HEK293T (cell line): ENCODE measurements at regions of chr6 and their contacts with region 1.

Region 1: GRCh38 chr6:37018198-37019064 is 13.0 kb downstream of the FGD2 start:
- DNase-seq: peak; percentile 87

Region 2: GRCh38 chr6:36874443-36875249 is 143.8 kb before region 1 on chr6 and contains the start of gene PPIL1:
- CTCF ChIA-PET with region 1: interaction called, 6 read pairs
- POLR2A ChIA-PET with region 1: interaction called, 19 read pairs
- DNase-seq: peak; percentile 91

Region 3: GRCh38 chr6:36977470-36977941 is 40.9 kb before region 1 on chr6:
- CTCF ChIA-PET with region 1: interaction called, 22 read pairs
- POLR2A ChIA-PET with region 1: interaction called, 3 read pairs
- DNase-seq: peak; percentile 58

Region 4: GRCh38 chr6:37029249-37029971 is 11.0 kb after region 1 on chr6:
- CTCF ChIA-PET with region 1: interaction called, 18 read pairs
- POLR2A ChIA-PET with region 1: no interaction called
- DNase-seq: peak; percentile 76

Region 5: GRCh38 chr6:37169496-37170272 is 151.3 kb after region 1 on chr6 and contains the start of gene PIM1:
- CTCF ChIA-PET with region 1: interaction called, 14 read pairs
- POLR2A ChIA-PET with region 1: interaction called, 3 read pairs
- DNase-seq: peak; percentile 95